GM12878 (cell line): ENCODE measurements at regions of chr5 and their contacts with region 1.

Region 1: DNA sequence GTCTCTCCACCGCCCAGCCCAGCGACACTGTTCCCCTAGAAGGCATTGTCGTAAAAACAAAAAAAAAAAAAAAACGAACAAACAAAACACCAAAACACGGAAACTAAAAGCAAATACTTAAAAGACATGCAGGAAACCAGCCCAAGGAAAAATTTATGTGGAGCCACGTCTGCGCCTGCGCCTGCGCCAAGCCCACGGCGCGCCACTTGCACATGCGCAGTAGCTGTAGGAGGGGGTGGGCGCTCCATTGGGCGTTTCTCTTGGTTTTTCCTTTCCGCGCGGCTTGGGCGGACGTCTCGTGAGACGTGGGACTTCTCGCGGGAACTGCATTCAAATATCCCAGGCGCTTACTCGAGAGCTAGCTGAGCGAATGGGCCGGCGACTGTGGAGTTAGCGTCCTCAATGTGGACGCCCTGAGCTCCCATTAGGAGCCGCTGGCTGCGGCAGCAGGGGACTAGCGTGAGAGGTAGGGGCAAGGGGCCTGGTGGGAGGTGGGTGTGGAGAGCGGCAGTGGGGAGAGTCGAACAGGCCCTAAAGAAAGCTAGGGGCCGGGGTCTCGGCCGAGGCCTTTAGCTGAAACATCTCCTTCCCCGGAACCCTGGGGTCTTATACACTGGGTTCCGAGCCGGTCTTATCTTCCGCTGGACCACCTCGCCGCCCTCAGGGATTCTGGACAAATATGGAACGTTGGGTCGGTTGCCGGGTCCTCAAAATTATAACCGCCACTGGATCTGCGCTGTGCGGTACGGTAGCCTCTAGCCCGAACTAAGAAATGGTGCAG is at the start of gene SPDL1:
- DNase-seq: peak; percentile 89
- ATAC-seq: peak; percentile 94
- H3K4me3 ChIP-seq: peak within 1 kb of the TSS; percentile 90
- H3K27ac ChIP-seq: peak within 1 kb of the TSS; percentile 88
- H3K4me1 ChIP-seq: no peaks in the 10 kb centered on the region; the same call in 1 of the 2 replicates
- H3K27me3 ChIP-seq: no peaks in the 10 kb centered on the region
- CTCF ChIP-seq: no peak
- EP300 ChIP-seq: no peak
- POLR2A ChIP-seq: peak; percentile 94
- RAD21 ChIP-seq: no peak
- polyA plus RNA-seq, gene SPDL1: 36.6 to 40.4 TPM

Region 2: GRCh38 chr5:168679515-168679920 is 904.1 kb before region 1 on chr5:
- CTCF ChIA-PET with region 1: interaction called, 5 read pairs
- POLR2A ChIA-PET with region 1: no interaction called
- RAD21 ChIA-PET with region 1: no interaction called
- SMC1A ChIA-PET with region 1: no interaction called
- in situ Hi-C with region 1: no loop called
- intact Hi-C with region 1: loop called (anchors 5 kb)
- DNase-seq: peak; percentile 16
- ATAC-seq: peak; percentile 88
- H3K4me3 ChIP-seq: no peak overlapping the region
- H3K27ac ChIP-seq: no peak overlapping the region
- H3K4me1 ChIP-seq: no peaks in the 10 kb centered on the region
- H3K27me3 ChIP-seq: no peaks in the 10 kb centered on the region; a peak in 1 of 4 replicates
- CTCF ChIP-seq: peak; percentile 78 to 91 (median 83)
- EP300 ChIP-seq: no peak
- POLR2A ChIP-seq: no peak
- RAD21 ChIP-seq: peak; percentile 86

Region 3: GRCh38 chr5:168987543-168988300 is 595.9 kb before region 1 on chr5:
- CTCF ChIA-PET with region 1: interaction called, 30 read pairs
- POLR2A ChIA-PET with region 1: no interaction called
- RAD21 ChIA-PET with region 1: interaction called, 10 read pairs
- SMC1A ChIA-PET with region 1: interaction called, 39 read pairs
- in situ Hi-C with region 1: loop called (anchors 5 kb)
- intact Hi-C with region 1: loop called (anchors 1 kb)
- DNase-seq: no peak
- ATAC-seq: peak; percentile 84
- H3K4me3 ChIP-seq: no peak overlapping the region
- H3K27ac ChIP-seq: no peak overlapping the region
- H3K4me1 ChIP-seq: no peaks in the 10 kb centered on the region
- H3K27me3 ChIP-seq: no peaks in the 10 kb centered on the region; a peak in 1 of 4 replicates
- CTCF ChIP-seq: peak; percentile 75 to 92 (median 78)
- EP300 ChIP-seq: no peak
- POLR2A ChIP-seq: no peak
- RAD21 ChIP-seq: peak; percentile 89

Region 4: DNA sequence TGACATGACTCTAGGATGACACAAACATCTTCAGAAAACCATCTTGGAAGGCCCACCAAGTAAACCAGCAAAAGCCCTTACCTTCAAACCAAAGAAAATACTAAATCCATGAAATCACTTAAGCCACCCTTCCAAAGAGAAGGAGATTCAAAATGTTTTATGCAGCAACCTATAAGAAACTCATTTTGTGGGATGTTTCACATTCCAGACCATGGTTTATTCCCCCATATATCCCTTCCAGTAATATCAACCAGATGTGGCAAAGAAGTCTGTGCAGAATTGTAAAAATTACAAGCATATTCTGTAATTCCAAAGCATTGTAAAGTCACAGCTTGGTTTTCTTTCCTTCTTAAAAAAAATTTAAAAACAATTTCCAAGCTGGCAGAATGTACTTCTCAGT is 400.0 kb before region 1 on chr5:
- CTCF ChIA-PET with region 1: no interaction called
- POLR2A ChIA-PET with region 1: no interaction called
- RAD21 ChIA-PET with region 1: no interaction called
- SMC1A ChIA-PET with region 1: no interaction called
- in situ Hi-C with region 1: no loop called
- intact Hi-C with region 1: no loop called
- DNase-seq: no peak
- ATAC-seq: no peak
- H3K4me3 ChIP-seq: no peak overlapping the region
- H3K27ac ChIP-seq: no peak overlapping the region
- H3K4me1 ChIP-seq: no peaks in the 10 kb centered on the region
- H3K27me3 ChIP-seq: no peaks in the 10 kb centered on the region
- CTCF ChIP-seq: no peak
- EP300 ChIP-seq: no peak
- POLR2A ChIP-seq: no peak
- RAD21 ChIP-seq: no peak

Region 5: DNA sequence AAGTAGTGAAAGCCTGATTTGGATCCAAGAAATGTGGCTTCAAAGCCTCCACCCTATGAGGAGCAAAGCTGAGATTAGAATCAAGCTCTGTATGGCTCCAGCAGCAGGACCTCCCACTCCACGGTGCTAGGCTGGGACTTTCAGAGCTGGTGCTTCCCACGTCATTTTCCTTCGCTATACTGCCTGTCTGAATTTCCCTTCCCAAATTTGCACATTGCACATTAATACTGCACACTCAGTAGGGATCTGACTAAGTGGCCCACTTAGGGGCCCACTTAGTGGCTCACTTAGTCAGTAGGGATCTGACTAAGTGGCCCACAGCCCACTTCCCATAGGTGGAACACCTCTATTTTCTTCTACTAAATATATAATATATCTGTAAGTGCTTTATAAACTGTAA is 14.1 kb before region 1 on chr5:
- CTCF ChIA-PET with region 1: interaction called, 19 read pairs
- POLR2A ChIA-PET with region 1: no interaction called
- RAD21 ChIA-PET with region 1: no interaction called
- SMC1A ChIA-PET with region 1: interaction called, 4 read pairs
- in situ Hi-C with region 1: no loop called
- intact Hi-C with region 1: no loop called
- DNase-seq: no peak
- ATAC-seq: peak; percentile 50
- H3K4me3 ChIP-seq: no peak overlapping the region
- H3K27ac ChIP-seq: no peak overlapping the region
- H3K4me1 ChIP-seq: no peaks in the 10 kb centered on the region
- H3K27me3 ChIP-seq: no peaks in the 10 kb centered on the region; a peak in 2 of 4 replicates
- CTCF ChIP-seq: no peak
- EP300 ChIP-seq: no peak
- POLR2A ChIP-seq: no peak
- RAD21 ChIP-seq: no peak

Region 6: DNA sequence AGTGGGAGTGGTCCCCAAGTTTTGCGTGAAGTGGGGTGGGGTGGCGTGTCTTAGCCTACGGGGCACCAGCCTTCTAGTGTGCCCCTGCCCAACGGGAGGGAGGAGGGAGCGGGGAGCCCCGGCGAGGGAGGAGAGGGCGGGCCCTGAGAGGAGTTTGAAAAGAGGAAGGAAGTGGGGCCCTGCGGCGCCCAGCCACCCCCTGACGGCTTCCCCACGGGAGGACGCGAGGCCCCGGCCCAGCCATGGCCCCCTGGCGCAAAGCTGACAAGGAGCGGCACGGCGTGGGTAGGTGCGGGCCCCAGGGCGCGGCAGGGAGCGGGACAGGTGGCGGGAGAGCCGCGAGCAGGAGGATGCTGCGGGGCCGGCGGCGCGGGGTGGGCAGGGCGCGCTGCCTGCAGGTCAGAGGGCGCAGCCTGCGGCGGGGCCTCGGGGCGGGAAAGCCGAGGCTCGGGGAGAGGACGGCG is 53.5 kb after region 1 on chr5 and contains the start of gene DOCK2:
- CTCF ChIA-PET with region 1: interaction called, 4 read pairs
- POLR2A ChIA-PET with region 1: interaction called, 13 read pairs
- RAD21 ChIA-PET with region 1: interaction called, 17 read pairs
- SMC1A ChIA-PET with region 1: interaction called, 9 read pairs
- in situ Hi-C with region 1: no loop called
- intact Hi-C with region 1: no loop called
- DNase-seq: no peak
- ATAC-seq: peak; percentile 95
- H3K4me3 ChIP-seq: peak within 1 kb of the TSS; percentile 89
- H3K27ac ChIP-seq: peak within 1 kb of the TSS; percentile 98
- H3K4me1 ChIP-seq: peaks cover 12% of the 10 kb centered on the region; the same call in 1 of the 2 replicates
- H3K27me3 ChIP-seq: no peaks in the 10 kb centered on the region
- CTCF ChIP-seq: no peak
- EP300 ChIP-seq: peak in 1 of 2 experiments; percentile 31; a peak in 1 of 4 replicates
- POLR2A ChIP-seq: peak; percentile 93
- RAD21 ChIP-seq: no peak
- polyA plus RNA-seq, gene DOCK2: 34.2 to 41.6 TPM

Region 7: GRCh38 chr5:169670769-169671525 is 87.3 kb after region 1 on chr5:
- CTCF ChIA-PET with region 1: interaction called, 25 read pairs
- POLR2A ChIA-PET with region 1: interaction called, 5 read pairs
- RAD21 ChIA-PET with region 1: interaction called, 53 read pairs
- SMC1A ChIA-PET with region 1: interaction called, 33 read pairs
- in situ Hi-C with region 1: no loop called
- intact Hi-C with region 1: loop called (anchors 2 kb)
- DNase-seq: peak; percentile 80
- ATAC-seq: peak; percentile 98
- H3K4me3 ChIP-seq: peak overlapping the region; percentile 42; the same call in 1 of the 2 replicates
- H3K27ac ChIP-seq: peak overlapping the region; percentile 95
- H3K4me1 ChIP-seq: peaks cover 33% of the 10 kb centered on the region
- H3K27me3 ChIP-seq: no peaks in the 10 kb centered on the region
- CTCF ChIP-seq: no peak
- EP300 ChIP-seq: peak; percentile 67 to 69; a peak in 3 of 4 replicates
- POLR2A ChIP-seq: no peak
- RAD21 ChIP-seq: peak; percentile 20; the same call in 1 of the 2 replicates